Sigmoid colon (tissue), 7 donors: ENCODE measurements at regions of chr12 and their contacts with region 1.

Region 1: GRCh38 chr12:22100958-22101748 is 55.1 kb downstream of the CMAS start:
- DNase-seq: no peak
- H3K4me3 ChIP-seq: no peak overlapping the region
- H3K27ac ChIP-seq: no peak overlapping the region
- H3K4me1 ChIP-seq: no peaks in the 10 kb centered on the region
- H3K27me3 ChIP-seq: no peaks in the 10 kb centered on the region
- CTCF ChIP-seq: peak; percentile 21 to 49 (median 44)
- EP300 ChIP-seq: no peak
- POLR2A ChIP-seq: no peak

Region 2: DNA sequence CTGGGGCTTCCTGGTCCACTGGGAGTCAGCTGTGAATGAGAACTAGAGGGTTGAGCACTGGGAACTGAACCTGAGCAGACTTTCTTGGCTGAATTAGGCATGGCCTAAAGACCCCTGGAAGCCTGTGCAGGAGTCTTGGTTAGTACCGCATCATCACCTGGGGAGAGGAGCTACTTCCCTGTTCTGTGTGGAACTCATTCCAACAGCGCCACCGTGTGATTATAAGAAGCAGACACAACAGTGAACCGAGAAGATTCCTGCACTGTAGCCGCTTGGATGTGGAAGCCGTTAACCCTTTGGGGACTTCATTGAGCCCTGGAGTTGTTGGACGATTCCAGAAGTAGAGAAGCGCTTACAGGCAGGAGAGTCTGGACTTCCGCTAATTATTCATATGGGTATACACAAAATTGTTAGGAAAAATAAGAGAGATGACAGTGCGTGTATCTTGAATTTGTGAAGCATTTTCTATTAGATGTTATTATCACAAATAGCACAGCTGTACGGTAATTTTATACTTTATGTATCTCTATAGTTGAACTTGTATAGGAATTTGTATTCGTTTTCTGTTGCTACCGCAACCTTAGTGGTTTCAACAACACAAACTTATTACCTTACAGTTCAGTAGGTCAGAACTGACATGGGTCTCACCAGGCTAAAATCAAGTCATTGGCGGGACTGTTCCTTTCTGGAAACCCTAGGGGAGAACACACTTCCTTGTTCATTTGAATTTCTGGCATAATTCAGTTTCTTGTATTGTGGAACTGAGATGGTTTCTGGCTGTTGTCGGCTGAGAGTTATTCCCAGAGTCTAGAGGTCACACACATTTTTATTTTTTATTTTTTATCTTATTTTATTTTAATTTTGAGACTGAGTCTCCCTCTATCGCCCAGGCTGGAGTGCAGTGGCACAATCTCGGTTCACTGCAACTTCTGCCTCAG is 342.5 kb after region 1 on chr12:
- intact Hi-C with region 1: loop called (anchors 5 kb)
- DNase-seq: peak; percentile 78
- H3K4me3 ChIP-seq: no peak overlapping the region
- H3K27ac ChIP-seq: no peak overlapping the region
- H3K4me1 ChIP-seq: peaks cover 0 to 11% (median 3%) of the 10 kb centered on the region in 4 donors
- H3K27me3 ChIP-seq: no peaks in the 10 kb centered on the region
- CTCF ChIP-seq: peak; percentile 62 to 73 (median 66)
- EP300 ChIP-seq: no peak
- POLR2A ChIP-seq: no peak